Motor neuron (in vitro differentiated cells): ENCODE measurements at regions of chr9 and their contacts with region 1.

Region 1: DNA sequence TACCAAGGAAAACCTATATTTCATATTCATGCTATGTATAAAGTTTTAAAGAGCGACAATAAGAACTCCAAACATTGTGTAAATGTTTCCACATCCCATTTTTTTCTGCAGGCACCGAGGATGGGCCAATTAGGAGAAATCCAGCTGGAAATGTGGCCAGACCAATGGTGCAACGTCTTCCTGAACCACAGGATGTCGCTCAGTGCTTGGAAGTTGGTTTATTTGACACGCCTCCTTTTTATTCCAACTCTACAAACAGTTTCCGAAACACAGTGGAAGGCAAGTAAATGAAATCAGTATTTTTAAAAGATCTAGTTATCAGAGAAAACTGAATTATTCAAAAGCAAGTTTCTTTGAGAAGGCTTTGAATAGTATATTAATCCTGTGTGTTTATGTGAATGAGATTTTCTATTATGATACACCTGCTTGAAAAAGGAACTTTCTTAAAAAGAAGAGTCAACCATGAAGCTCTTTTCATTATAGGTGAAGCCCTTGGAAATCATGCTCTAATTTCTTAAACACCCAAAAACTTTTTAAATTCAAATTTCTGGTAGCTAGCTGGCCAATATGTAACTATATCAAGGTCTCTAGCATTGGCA is 9.1 kb downstream of the TYRP1 start:
- ATAC-seq: peak in 6 of 8 experiments; percentile 31 to 92 (median 70)
- H3K4me3 ChIP-seq: no peak overlapping the region
- H3K27ac ChIP-seq: no peak overlapping the region
- H3K4me1 ChIP-seq: peaks cover 9 to 13% of the 10 kb centered on the region in 2 donors

Region 2: DNA sequence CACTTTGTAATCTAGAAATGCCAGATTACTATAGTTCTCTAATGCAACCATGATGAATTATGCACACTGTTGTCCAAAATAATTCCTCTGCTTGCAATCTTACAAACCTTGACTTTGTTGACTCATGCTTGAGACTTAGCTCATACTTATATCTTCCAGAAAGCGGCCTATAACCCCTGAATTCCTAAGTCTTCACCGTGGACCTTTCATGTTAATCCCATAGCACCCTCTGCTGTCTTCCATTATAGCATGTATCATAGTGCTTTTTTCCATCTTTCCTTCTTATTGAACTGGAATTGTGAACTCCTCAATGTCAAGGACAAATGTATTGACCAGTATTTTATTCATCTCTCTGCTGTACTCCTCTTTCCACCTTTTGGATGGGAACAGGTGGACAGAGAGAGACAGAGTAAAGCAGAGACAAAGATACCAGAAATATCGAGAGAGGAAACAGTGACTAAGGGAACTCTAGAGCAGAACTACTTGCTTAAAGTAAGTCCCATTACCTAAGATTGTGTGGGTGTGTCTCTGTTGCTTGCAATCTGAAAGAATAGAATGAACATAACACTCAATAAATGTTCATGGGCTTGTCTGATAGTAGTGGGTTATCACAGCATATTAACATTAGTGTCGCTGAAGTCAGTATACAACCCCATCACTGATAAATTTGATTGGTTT is 182.6 kb after region 1 on chr9:
- in situ Hi-C with region 1: loop called in 1 of 9 experiments (anchors 25 kb)
- ATAC-seq: peak in 5 of 8 experiments; percentile 53 to 75 (median 67)
- H3K4me3 ChIP-seq: no peak overlapping the region
- H3K27ac ChIP-seq: no peak overlapping the region
- H3K4me1 ChIP-seq: peaks cover 0 to 18% of the 10 kb centered on the region in 2 donors

Region 3: DNA sequence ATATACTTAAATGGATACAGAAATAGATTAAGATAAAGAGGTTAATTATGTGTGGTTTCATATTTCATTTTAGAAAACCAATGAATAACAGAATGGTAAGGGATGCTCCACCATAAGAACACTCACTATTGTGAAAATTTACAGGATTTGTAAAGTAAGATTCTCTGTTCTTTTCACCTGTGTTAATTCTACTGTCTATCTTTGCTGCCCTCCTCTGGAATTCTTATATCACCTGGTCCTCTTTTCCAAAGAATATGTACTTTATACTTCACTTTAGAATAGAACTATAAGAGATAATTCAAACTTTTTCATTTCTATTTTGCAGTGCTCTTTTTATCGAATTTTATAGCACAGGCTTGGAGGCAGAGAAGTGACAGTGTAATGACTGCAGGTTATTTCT is 286.0 kb after region 1 on chr9:
- in situ Hi-C with region 1: loop called in 1 of 9 experiments (anchors 25 kb)
- ATAC-seq: peak in 1 of 8 experiments; percentile 14
- H3K4me3 ChIP-seq: no peak overlapping the region
- H3K27ac ChIP-seq: no peak overlapping the region
- H3K4me1 ChIP-seq: no peaks in the 10 kb centered on the region

Region 4: DNA sequence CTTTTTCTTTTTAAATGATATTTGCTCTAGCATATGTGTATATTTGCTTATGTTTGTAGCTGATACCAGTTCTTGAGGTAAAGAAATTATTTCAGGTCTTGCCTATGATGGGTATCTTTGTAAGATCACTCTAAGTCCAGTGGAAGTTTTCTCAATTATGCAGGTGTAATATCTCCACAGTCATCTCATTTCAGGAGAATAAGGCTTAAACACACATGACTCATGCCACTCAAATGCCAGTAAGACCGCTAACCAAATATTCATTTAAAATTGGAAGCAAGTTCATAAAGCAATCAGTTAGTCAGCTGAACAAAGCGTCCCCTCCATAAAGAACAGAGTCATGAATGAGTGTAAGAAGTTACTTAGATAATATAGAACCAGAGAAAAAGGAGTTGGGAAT is 321.2 kb after region 1 on chr9:
- in situ Hi-C with region 1: loop called in 1 of 9 experiments (anchors 25 kb)
- ATAC-seq: no peak
- H3K4me3 ChIP-seq: no peak overlapping the region
- H3K27ac ChIP-seq: no peak overlapping the region
- H3K4me1 ChIP-seq: no peaks in the 10 kb centered on the region

Region 5: GRCh38 chr9:13063985-13064689 is 361.9 kb after region 1 on chr9:
- in situ Hi-C with region 1: loop called in 1 of 9 experiments (anchors 25 kb)
- ATAC-seq: peak in 3 of 8 experiments; percentile 79 to 99 (median 96)
- H3K4me3 ChIP-seq: no peak overlapping the region
- H3K27ac ChIP-seq: no peak overlapping the region
- H3K4me1 ChIP-seq: no peaks in the 10 kb centered on the region

Region 6: GRCh38 chr9:13088720-13089427 is 386.6 kb after region 1 on chr9:
- in situ Hi-C with region 1: loop called in 3 of 9 experiments (anchors 25 kb)
- ATAC-seq: peak; percentile 50 to 93 (median 82)
- H3K4me3 ChIP-seq: no peak overlapping the region
- H3K27ac ChIP-seq: no peak overlapping the region
- H3K4me1 ChIP-seq: no peaks in the 10 kb centered on the region